ENCODE measurements at regions of chr14 and their contacts with region 1.

Region 1: GRCh38 chr14:100025111-100025510 is 40.1 kb upstream of the EVL start:
- DNase-seq: peak; percentile 35
- H3K4me3 Mint-ChIP-seq: no peak overlapping the region
- H3K27ac Mint-ChIP-seq: no peak overlapping the region
- H3K4me1 Mint-ChIP-seq: peaks cover 6% of the 10 kb centered on the region
- H3K27me3 Mint-ChIP-seq: no peaks in the 10 kb centered on the region

Region 2: DNA sequence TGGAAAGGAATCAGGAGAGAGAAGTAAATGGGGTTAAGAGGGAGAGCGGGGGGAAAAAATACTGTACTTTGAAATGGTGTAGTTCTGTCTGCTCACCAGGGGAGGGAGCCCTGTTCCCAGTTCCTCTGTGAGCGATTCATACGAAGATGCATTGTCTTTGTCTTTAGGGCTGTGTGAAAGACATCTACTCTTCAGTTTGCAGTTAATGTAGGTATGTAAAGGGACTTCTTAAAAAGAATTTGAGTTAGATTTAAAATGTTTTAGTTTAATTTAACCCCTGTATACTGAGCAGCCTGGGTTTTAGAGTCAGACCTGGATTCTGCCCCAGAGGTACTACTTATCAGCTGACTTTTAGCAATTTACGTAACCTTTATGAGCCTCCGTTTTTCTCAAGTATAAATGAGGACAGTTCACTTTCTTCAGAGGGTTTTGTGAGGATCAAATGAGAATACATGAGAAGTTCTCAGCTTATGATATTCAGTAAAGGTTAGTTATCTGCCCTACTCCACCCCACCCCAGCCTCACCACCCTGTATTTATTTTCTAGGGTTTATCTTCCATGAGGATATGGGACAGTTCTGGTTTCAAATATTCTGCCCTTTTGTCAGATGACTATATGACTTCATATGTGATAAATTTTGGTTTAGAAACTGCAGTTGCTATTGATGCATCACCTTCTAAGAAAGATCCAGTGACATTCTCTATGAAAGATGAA is 42.4 kb before region 1 on chr14:
- CTCF ChIA-PET with region 1: interaction called, 24 read pairs
- DNase-seq: peak; percentile 71
- H3K4me3 Mint-ChIP-seq: no peak overlapping the region
- H3K27ac Mint-ChIP-seq: no peak overlapping the region
- H3K4me1 Mint-ChIP-seq: peaks cover 17% of the 10 kb centered on the region
- H3K27me3 Mint-ChIP-seq: no peaks in the 10 kb centered on the region

Measured in activated naive CD4-positive, alpha-beta T cell treated with anti-CD3 and anti-CD28 coated beads, Interleukin-2, amount 10 ng/mL, durations not matched to agents 7 days and 5 days (primary cell).